ENCODE measurements at regions of chr2 and their contacts with region 1.

Region 1: DNA sequence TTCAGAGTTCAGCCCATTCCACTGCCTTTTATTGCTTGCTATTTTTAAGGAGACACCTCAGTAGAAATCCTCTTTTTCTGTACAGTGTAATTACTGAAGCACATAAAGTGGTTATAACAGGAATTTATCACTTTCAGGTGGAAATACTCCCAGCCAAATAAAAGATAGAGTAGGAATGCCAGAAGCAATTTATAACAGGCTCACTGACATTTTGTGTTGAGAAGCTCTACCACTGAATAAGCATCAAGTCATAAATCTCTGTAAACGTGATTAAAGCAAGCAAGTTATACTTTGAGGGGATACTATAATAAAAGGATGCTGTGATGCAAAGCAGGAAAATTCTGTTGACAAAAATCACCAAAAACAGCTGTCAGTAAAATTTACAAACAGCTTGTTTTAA is 6.7 kb upstream of the BARD1 start:
- DNase-seq: no peak
- ATAC-seq: no peak

Region 2: GRCh38 chr2:214096208-214096715 is 719.9 kb before region 1 on chr2:
- intact Hi-C with region 1: no loop called
- DNase-seq: no peak
- ATAC-seq: no peak

Region 3: DNA sequence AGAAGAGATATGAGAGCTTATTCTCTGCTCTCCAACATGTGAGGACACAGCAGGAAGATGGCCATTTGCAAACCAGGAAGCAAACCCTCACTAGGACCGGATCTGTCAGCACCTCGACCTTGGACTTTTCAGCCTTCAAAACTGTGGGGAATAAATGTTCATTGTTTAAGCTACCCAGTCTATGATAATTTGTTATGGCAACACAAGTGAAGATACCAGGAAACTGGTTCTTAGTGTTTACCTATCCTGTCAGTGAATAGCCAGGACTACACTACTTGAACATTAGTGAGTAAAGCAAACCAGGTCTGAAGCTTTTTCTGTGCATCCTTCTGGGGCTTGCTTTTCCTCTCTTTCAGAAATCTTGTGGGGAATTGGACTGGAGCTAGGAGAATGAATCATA is 37.8 kb after region 1 on chr2:
- intact Hi-C with region 1: no loop called
- DNase-seq: no peak
- ATAC-seq: no peak

Region 4: GRCh38 chr2:214865363-214865762 is 49.2 kb after region 1 on chr2:
- intact Hi-C with region 1: loop called (anchors 2 kb)
- DNase-seq: no peak
- ATAC-seq: no peak

Measured in sciatic nerve (tissue), 2 donors.